Adrenal gland (tissue), 19 donors: ENCODE measurements at regions of chr10 and their contacts with region 1.

Region 1: DNA sequence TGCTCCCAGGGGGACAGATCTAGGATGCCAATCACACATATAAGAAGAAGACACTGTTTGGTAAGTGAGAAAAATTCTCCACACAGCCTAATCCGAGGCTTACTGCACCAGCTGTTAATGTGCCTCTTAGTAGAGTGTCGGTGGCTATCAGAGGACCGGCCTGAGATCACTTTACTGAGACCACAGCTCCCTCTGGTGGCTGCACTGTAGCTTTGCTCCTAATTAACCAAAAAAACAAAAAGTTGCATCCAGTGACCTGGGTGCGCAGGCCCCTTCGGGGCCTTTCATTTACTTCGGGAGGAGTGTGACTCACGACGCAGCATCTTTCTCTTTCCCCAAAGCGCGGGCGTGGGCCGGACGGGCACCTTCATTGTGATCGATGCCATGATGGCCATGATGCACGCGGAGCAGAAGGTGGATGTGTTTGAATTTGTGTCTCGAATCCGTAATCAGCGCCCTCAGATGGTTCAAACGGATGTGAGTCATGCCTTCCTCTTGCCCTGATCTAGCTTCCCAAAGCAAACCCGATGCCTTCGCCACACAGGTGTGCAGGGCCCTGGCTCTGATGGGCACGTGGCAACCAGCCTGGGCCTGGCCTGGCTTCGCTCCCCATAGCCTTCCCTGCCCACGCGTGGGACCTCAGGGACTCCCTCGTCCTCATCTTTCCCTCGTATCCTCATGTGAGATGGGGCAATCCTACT is 56.7 kb downstream of the MKI67 start:
- DNase-seq: peak; percentile 69 to 84 (median 70)
- H3K4me3 ChIP-seq: no peak overlapping the region
- H3K27ac ChIP-seq: no peak overlapping the region
- H3K4me1 ChIP-seq: peaks cover 0 to 7% of the 10 kb centered on the region in 2 donors
- H3K27me3 ChIP-seq: no peaks in the 10 kb centered on the region
- CTCF ChIP-seq: peak; percentile 76 to 88 (median 84)
- POLR2A ChIP-seq: no peak

Region 2: DNA sequence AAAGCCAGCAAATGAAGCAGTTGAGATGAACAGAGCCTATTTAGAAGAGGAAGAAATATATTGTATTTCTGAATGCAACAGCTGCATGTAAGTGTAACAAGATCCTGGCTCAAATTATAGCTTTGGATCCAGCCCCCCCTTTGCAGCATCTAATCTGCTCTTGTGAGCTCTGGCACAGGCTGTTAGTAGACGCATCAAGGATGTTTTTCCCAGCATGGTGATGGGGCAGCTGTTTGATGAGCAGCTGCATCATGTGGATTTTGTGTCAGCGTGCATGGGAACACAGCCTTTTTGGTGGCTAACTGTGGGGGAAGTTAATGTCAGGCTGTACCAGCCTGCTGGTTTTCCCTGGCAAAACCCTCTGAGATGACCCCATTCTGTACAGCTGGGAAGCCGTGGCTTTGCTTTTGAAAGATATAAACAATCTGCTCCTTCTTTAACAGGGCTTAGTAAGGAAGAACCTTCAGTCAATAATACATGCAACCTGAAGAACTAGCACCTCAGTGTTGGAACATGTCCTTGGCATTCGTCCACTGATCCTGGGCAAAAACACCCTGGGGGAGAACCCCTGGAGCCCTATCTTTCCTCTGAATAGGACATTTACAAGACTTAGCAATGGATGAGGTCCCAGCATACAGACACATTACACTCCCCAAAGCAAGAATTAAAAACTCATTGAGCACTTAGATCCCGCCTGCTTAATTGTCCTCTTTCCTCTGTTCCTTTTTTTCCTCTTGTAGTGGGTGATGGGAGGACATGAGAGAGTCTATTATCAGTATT is 449.8 kb before region 1 on chr10:
- intact Hi-C with region 1: no loop called
- DNase-seq: no peak
- H3K4me3 ChIP-seq: no peak overlapping the region
- H3K27ac ChIP-seq: no peak overlapping the region
- H3K4me1 ChIP-seq: no peaks in the 10 kb centered on the region
- H3K27me3 ChIP-seq: no peaks in the 10 kb centered on the region
- CTCF ChIP-seq: no peak
- POLR2A ChIP-seq: no peak

Region 3: GRCh38 chr10:127906548-127907377 is 162.7 kb before region 1 on chr10 and contains the start of gene PTPRE:
- intact Hi-C with region 1: loop called (anchors 5 kb)
- DNase-seq: peak; percentile 76 to 85 (median 82)
- H3K4me3 ChIP-seq: peak within 1 kb of the TSS in 3 of 4 donors; percentile 52 to 90 (median 55)
- H3K27ac ChIP-seq: peak within 1 kb of the TSS; percentile 60 to 93 (median 91)
- H3K4me1 ChIP-seq: peaks cover 32 to 40% of the 10 kb centered on the region in 2 donors
- H3K27me3 ChIP-seq: no peaks in the 10 kb centered on the region
- CTCF ChIP-seq: peak; percentile 10 to 99 (median 75)
- POLR2A ChIP-seq: peak in 1 of 2 donors; percentile 65
- total RNA-seq, gene PTPRE: 24.9 to 52.8 (median 43.9) TPM

Region 4: GRCh38 chr10:128011175-128011979 is 58.1 kb before region 1 on chr10:
- intact Hi-C with region 1: loop called in 1 of 2 experiments (anchors 10 kb)
- DNase-seq: peak; percentile 67 to 92 (median 85)
- H3K4me3 ChIP-seq: peak overlapping the region in 1 of 4 donors; percentile 11
- H3K27ac ChIP-seq: peak overlapping the region in 2 of 5 donors; percentile 28 to 82
- H3K4me1 ChIP-seq: peaks cover 25 to 28% of the 10 kb centered on the region in 2 donors
- H3K27me3 ChIP-seq: no peaks in the 10 kb centered on the region
- CTCF ChIP-seq: peak; percentile 96 to 99 (median 98)
- POLR2A ChIP-seq: no peak

Region 5: GRCh38 chr10:128026614-128027300 is 42.7 kb before region 1 on chr10:
- intact Hi-C with region 1: loop called in 1 of 2 experiments (anchors 5 kb)
- DNase-seq: no peak
- H3K4me3 ChIP-seq: no peak overlapping the region
- H3K27ac ChIP-seq: peak overlapping the region in 3 of 5 donors; percentile 39 to 51 (median 39)
- H3K4me1 ChIP-seq: peaks cover 6 to 17% of the 10 kb centered on the region in 2 donors
- H3K27me3 ChIP-seq: no peaks in the 10 kb centered on the region
- CTCF ChIP-seq: no peak
- POLR2A ChIP-seq: peak in 1 of 2 donors; percentile 10

Region 6: DNA sequence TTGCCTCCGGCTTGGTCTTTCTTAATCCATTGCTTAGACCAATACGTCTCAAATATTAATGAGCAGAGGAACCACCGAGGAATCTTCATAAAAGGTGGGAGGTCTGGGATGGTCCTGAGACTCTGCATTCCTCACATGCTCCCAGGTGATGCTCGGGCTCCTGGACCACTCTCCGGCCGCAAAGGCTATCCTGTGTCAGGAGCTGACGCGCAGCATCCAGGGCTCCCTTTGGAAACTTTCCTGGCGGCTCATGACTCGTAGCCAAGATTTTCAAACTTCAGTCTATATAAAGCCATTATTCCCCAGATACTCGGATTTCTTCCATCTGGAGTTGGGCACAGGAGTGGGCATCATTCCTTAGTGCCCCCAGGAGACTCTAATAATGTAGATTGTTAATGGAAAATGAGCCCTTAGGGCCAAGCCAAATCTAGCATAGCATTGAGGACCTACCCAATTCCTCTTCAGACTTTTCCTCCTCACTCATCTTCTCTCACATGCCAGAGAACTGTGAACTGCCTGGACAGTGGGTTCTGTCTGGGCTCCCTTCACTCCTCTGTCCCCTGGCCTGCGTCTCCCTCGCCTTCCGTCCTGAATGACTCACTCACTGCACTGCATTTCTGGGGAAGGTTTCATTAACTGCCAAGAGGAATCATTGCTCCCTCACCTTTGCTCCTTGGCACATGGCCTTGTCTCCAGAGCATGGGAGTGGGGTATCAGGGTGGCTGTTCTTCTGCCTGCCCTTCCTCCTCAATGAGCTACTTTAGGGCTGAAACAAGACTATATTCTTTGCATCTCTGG is 32.6 kb before region 1 on chr10:
- intact Hi-C with region 1: loop called in 1 of 2 experiments (anchors 2 kb)
- DNase-seq: peak in 6 of 7 donors; percentile 46 to 62 (median 52)
- H3K4me3 ChIP-seq: no peak overlapping the region
- H3K27ac ChIP-seq: no peak overlapping the region
- H3K4me1 ChIP-seq: peaks cover 0 to 8% of the 10 kb centered on the region in 2 donors
- H3K27me3 ChIP-seq: no peaks in the 10 kb centered on the region
- CTCF ChIP-seq: no peak
- POLR2A ChIP-seq: no peak

Region 7: GRCh38 chr10:128125944-128126764 is 56.7 kb after region 1 on chr10 and contains the start of gene MKI67:
- intact Hi-C with region 1: no loop called
- DNase-seq: peak; percentile 75 to 89 (median 81)
- H3K4me3 ChIP-seq: peak within 1 kb of the TSS in 2 of 4 donors; percentile 43 to 59
- H3K27ac ChIP-seq: no peak within 1 kb of the TSS
- H3K4me1 ChIP-seq: peaks cover 0 to 7% of the 10 kb centered on the region in 2 donors
- H3K27me3 ChIP-seq: peaks cover 23% of the 10 kb centered on the region
- CTCF ChIP-seq: no peak
- POLR2A ChIP-seq: no peak
- total RNA-seq, gene MKI67: 1.5 to 16.8 (median 4.0) TPM

Region 8: DNA sequence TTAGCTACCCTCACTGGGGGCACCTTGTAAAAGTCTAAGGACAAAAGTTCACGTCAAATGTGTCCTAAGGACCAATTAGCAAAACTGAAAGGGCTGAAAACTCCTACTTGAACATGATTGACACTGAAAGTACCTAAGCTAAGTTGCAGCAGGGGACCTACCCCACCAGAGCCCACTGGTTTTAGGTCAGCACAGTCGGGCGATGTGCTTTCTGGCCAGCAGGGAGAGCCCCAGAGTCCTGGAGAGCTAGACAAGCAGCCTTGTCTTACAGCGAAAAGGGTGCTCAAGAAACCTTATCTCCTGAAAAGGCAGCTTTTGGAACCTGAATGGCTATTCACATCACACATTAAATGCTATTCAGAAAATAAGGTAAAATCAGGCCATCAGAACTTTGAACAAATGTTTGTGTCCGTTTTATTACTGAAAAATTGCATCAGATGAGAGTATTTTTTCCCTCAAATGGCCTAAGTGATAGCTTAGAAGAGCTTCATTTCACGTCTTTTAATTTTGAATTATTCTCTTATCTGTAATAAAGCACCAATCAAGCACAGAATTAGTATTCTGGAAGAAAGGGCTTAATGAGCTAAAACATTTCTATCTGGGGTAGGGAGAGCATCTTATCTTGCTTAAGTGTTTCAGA is 108.9 kb after region 1 on chr10:
- intact Hi-C with region 1: no loop called
- DNase-seq: peak in 1 of 7 donors; percentile 4
- H3K4me3 ChIP-seq: no peak overlapping the region
- H3K27ac ChIP-seq: no peak overlapping the region
- H3K4me1 ChIP-seq: no peaks in the 10 kb centered on the region
- H3K27me3 ChIP-seq: no peaks in the 10 kb centered on the region
- CTCF ChIP-seq: peak in 1 of 6 experiments; percentile 11
- POLR2A ChIP-seq: no peak

Region 9: DNA sequence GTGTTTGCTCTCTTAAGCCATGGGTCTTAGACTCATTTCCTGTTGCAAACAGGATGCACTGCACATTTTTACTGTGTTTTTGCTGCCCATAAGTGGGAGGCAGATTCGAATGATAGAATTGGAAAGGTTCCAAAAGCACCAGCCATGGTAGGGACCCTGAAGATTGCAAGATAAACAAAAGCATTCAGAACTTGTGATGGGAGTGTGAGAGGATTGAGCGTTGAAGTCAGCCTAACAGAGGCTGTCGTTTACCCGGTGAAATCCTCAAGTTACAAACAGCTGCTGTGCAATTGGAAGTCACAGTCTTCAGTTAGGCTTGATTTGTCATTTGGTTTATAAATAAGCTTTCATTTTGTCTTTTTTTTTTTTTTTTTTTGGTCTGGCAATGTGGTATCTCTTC is 249.4 kb after region 1 on chr10:
- intact Hi-C with region 1: no loop called
- DNase-seq: no peak
- H3K4me3 ChIP-seq: no peak overlapping the region
- H3K27ac ChIP-seq: no peak overlapping the region
- H3K4me1 ChIP-seq: no peaks in the 10 kb centered on the region
- H3K27me3 ChIP-seq: no peaks in the 10 kb centered on the region
- CTCF ChIP-seq: no peak
- POLR2A ChIP-seq: no peak